PC-3 (cell line): ENCODE measurements at regions of chr1 and their contacts with region 1.

Region 1: GRCh38 chr1:206912445-206913095 is 9.2 kb downstream of the FCMR start:
- DNase-seq: peak; percentile 98
- ATAC-seq: peak; percentile 32
- H3K4me3 ChIP-seq: no peak overlapping the region
- H3K27ac ChIP-seq: peak overlapping the region; percentile 13
- H3K4me1 ChIP-seq: peaks cover 37% of the 10 kb centered on the region
- H3K27me3 ChIP-seq: no peaks in the 10 kb centered on the region
- CTCF ChIP-seq: peak; percentile 99

Region 2: DNA sequence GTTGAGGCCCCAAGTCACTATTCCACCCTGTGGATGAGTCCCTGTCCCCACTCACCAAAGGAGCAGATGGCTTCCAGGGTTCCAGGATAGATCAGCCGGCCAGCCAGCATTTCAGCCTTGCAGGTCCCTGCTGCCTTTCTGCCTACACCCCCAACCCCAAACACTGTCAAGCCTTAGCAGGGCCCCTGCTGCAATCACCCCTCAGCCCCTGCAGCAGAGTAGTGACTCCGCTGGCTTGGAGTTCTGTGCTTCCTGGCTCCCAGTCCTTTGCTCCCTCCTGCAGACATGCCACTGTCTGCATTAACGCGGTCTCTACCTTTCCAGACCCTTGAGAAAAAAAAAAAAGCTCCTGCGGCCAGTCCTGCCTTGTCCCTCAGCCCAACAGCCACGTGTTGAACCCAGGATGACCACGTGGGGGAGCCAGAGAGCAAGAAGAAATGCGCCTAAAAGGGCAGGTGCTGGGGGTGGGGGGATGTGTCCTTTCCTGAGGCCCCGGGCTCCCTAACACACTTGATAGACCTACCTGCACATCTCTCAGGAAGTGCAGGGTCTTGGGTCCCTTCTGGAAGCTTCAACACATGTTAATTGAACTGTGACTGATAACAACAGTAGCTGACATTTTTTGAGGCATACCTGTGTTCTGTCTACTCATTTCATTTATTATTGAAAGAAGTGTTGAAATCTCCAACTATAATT is 367.9 kb before region 1 on chr1:
- CTCF ChIA-PET with region 1: no interaction called
- POLR2A ChIA-PET with region 1: interaction called, 42 read pairs
- intact Hi-C with region 1: no loop called
- DNase-seq: peak; percentile 93
- ATAC-seq: peak; percentile 76
- H3K4me3 ChIP-seq: no peak overlapping the region
- H3K27ac ChIP-seq: no peak overlapping the region
- H3K4me1 ChIP-seq: 0 out of 2 replicates have a peak, but pooled peaks cover 8% of the 10 kb centered on the region
- H3K27me3 ChIP-seq: no peaks in the 10 kb centered on the region
- CTCF ChIP-seq: peak; percentile 99

Region 3: GRCh38 chr1:206635080-206635977 is 277.2 kb before region 1 on chr1 and contains the start of gene DYRK3:
- CTCF ChIA-PET with region 1: interaction called, 14 read pairs
- POLR2A ChIA-PET with region 1: no interaction called
- intact Hi-C with region 1: loop called (anchors 1 kb)
- DNase-seq: peak; percentile 98
- ATAC-seq: peak; percentile 82
- H3K4me3 ChIP-seq: peak within 1 kb of the TSS; percentile 85
- H3K27ac ChIP-seq: peak within 1 kb of the TSS; percentile 54
- H3K4me1 ChIP-seq: peaks cover 21% of the 10 kb centered on the region
- H3K27me3 ChIP-seq: no peaks in the 10 kb centered on the region
- CTCF ChIP-seq: no peak
- total RNA-seq, gene DYRK3: 12.1 and 14.1 TPM in 2 replicates

Region 4: DNA sequence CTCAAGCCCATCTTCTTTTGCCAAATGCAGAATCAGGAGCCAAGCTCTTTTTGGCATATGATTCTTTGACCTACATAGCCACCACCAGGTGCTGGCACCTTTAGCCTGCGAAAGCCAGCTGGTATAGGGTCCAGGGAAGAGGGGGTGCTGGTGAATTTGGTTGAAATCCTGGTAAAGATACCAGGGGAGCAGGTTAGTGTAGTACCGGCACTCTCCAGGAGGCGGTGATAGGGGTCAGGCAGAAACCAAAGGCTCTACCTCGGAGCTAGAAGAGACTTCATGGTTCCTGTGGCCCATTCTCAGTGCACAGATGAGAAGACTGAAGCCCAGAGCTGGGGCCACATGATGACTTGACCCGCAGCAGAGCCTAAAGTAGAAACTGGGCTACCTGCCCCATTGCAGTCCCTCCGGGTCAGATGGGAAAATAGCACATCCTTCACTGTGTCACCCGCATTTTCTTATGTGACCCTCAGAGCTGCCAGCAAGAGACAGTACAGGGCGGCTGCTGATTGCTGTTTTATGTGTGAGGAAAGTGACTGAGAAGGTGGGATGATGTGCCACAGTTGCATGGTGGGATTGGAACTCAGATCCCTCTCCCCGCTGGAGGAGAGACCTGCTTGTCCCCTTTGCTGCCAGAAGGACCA is 177.9 kb before region 1 on chr1:
- CTCF ChIA-PET with region 1: interaction called, 18 read pairs
- POLR2A ChIA-PET with region 1: no interaction called
- intact Hi-C with region 1: loop called (anchors 1 kb)
- DNase-seq: peak; percentile 81
- ATAC-seq: peak; percentile 69
- H3K4me3 ChIP-seq: no peak overlapping the region
- H3K27ac ChIP-seq: no peak overlapping the region
- H3K4me1 ChIP-seq: peaks cover 6% of the 10 kb centered on the region
- H3K27me3 ChIP-seq: no peaks in the 10 kb centered on the region
- CTCF ChIP-seq: peak; percentile 95

Region 5: GRCh38 chr1:206856674-206857464 is 55.7 kb before region 1 on chr1:
- CTCF ChIA-PET with region 1: interaction called, 5 read pairs
- POLR2A ChIA-PET with region 1: no interaction called
- intact Hi-C with region 1: loop called (anchors 1 kb)
- DNase-seq: peak; percentile 51
- ATAC-seq: peak; percentile 80
- H3K4me3 ChIP-seq: no peak overlapping the region
- H3K27ac ChIP-seq: no peak overlapping the region
- H3K4me1 ChIP-seq: peaks cover 5% of the 10 kb centered on the region; the same call in 1 of the 2 replicates
- H3K27me3 ChIP-seq: peaks cover 8% of the 10 kb centered on the region
- CTCF ChIP-seq: peak; percentile 85

Region 6: GRCh38 chr1:206890690-206891089 is 21.9 kb before region 1 on chr1:
- CTCF ChIA-PET with region 1: interaction called, 16 read pairs
- POLR2A ChIA-PET with region 1: interaction called, 21 read pairs
- intact Hi-C with region 1: loop called (anchors 1 kb)
- DNase-seq: peak; percentile 96
- ATAC-seq: peak; percentile 60
- H3K4me3 ChIP-seq: peak overlapping the region; percentile 48
- H3K27ac ChIP-seq: peak overlapping the region; percentile 92
- H3K4me1 ChIP-seq: peaks cover 75% of the 10 kb centered on the region
- H3K27me3 ChIP-seq: no peaks in the 10 kb centered on the region
- CTCF ChIP-seq: no peak

Region 7: GRCh38 chr1:207077470-207078377 is 165.2 kb after region 1 on chr1:
- CTCF ChIA-PET with region 1: interaction called, 5 read pairs
- POLR2A ChIA-PET with region 1: no interaction called
- intact Hi-C with region 1: loop called (anchors 1 kb)
- DNase-seq: peak; percentile 98
- ATAC-seq: peak; percentile 68
- H3K4me3 ChIP-seq: no peak overlapping the region
- H3K27ac ChIP-seq: peak overlapping the region; percentile 3; the same call in 1 of the 2 replicates
- H3K4me1 ChIP-seq: peaks cover 37% of the 10 kb centered on the region
- H3K27me3 ChIP-seq: no peaks in the 10 kb centered on the region
- CTCF ChIP-seq: peak; percentile 99